ENCODE measurements at regions of chr4 and their contacts with region 1.

Region 1: DNA sequence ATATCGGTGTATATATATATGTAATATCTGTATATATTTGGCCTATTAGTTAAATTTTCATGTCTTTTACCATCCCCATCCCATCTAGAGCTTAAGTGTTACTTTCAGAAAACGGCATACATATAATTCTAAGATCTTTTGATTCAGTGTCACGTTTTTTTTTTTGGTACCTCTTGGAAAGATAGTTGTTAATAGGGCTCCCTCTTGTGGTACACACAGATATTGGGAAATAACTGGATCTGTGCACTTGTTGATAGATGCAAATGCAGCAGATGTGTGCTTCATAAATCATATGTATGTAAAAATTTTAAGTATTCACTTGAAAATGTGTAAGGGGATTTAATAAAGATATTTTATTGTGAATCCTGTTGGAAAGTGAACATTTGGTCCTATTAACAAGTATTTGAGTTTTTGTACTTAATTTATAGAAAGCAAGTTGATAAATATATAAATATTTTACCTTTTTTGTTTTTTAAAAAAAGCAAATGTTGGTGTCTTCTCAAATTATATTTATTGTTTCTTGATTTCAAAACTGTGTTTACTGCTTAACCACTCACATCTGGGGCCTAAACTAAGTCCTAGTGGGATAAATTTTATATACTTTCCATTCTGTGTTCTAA is 74.7 kb downstream of the PAQR3 start:
- DNase-seq: peak; percentile 44
- ATAC-seq: peak; percentile 80
- H3K4me3 ChIP-seq: no peak overlapping the region
- H3K27ac ChIP-seq: no peak overlapping the region
- H3K4me1 ChIP-seq: peaks cover 7% of the 10 kb centered on the region
- H3K27me3 ChIP-seq: no peaks in the 10 kb centered on the region
- CTCF ChIP-seq: peak; percentile 60 to 77 (median 60); a peak in 5 of 6 replicates
- EP300 ChIP-seq: no peak
- POLR2A ChIP-seq: no peak
- RAD21 ChIP-seq: peak; percentile 96

Region 2: DNA sequence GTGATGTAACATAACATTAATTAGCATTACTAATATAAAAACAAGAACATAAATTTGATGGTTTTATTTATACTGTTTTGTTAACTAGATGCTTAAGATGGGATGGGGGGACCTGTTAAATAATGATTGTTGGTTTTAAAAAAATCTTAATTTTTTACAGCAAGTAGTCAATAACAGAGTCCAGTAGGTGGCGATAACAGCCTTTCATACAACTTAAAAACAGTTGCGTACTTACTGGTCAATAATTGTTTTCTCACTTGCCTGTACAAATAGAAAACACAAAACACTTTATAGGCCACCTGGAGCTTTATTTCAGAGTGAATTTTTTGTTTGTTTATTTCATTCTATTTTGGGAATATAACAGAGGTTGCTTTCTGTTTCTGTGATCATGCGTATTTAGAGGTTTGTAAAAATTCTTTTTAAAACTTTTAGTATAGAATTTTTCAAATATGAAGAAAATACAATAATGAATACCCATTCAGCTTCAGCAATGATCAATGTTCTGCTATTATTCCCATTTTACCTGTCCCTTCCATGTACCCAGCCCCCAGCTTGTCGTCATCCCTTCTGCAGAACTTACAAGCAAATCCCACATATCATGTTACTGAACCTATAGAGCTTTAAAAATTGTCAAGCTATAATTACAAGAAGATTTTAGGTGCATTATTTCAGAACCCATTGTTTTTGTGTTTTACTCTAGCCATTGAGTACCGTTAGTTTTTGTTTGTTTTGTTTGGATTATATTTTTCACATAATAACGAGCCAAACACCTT is 904.8 kb before region 1 on chr4:
- CTCF ChIA-PET with region 1: interaction called, 14 read pairs
- POLR2A ChIA-PET with region 1: no interaction called
- RAD21 ChIA-PET with region 1: no interaction called
- SMC1A ChIA-PET with region 1: interaction called, 9 read pairs
- in situ Hi-C with region 1: loop called (anchors 10 kb)
- intact Hi-C with region 1: loop called (anchors 2 kb)
- DNase-seq: peak; percentile 12
- ATAC-seq: peak; percentile 52
- H3K4me3 ChIP-seq: no peak overlapping the region
- H3K27ac ChIP-seq: no peak overlapping the region
- H3K4me1 ChIP-seq: no peaks in the 10 kb centered on the region
- H3K27me3 ChIP-seq: no peaks in the 10 kb centered on the region
- CTCF ChIP-seq: peak; percentile 53 to 54 (median 53)
- EP300 ChIP-seq: no peak
- POLR2A ChIP-seq: no peak
- RAD21 ChIP-seq: peak; percentile 74

Region 3: GRCh38 chr4:78459327-78459726 is 405.2 kb before region 1 on chr4:
- CTCF ChIA-PET with region 1: no interaction called
- POLR2A ChIA-PET with region 1: no interaction called
- RAD21 ChIA-PET with region 1: interaction called, 3 read pairs
- SMC1A ChIA-PET with region 1: no interaction called
- in situ Hi-C with region 1: no loop called
- intact Hi-C with region 1: loop called (anchors 10 kb)
- DNase-seq: no peak
- ATAC-seq: peak; percentile 78
- H3K4me3 ChIP-seq: no peak overlapping the region
- H3K27ac ChIP-seq: no peak overlapping the region
- H3K4me1 ChIP-seq: no peaks in the 10 kb centered on the region
- H3K27me3 ChIP-seq: no peaks in the 10 kb centered on the region
- CTCF ChIP-seq: no peak
- EP300 ChIP-seq: 0 out of 4 replicates have a peak, but pooled peaks of 1 of the 2 experiments have one; percentile 34
- POLR2A ChIP-seq: no peak
- RAD21 ChIP-seq: no peak

Region 4: GRCh38 chr4:78612398-78613178 is 251.9 kb before region 1 on chr4:
- CTCF ChIA-PET with region 1: interaction called, 160 read pairs
- POLR2A ChIA-PET with region 1: interaction called, 4 read pairs
- RAD21 ChIA-PET with region 1: interaction called, 134 read pairs
- SMC1A ChIA-PET with region 1: interaction called, 184 read pairs
- in situ Hi-C with region 1: loop called (anchors 5 kb)
- intact Hi-C with region 1: loop called (anchors 1 kb)
- DNase-seq: no peak
- ATAC-seq: peak; percentile 64
- H3K4me3 ChIP-seq: no peak overlapping the region
- H3K27ac ChIP-seq: no peak overlapping the region
- H3K4me1 ChIP-seq: peaks cover 35% of the 10 kb centered on the region
- H3K27me3 ChIP-seq: no peaks in the 10 kb centered on the region
- CTCF ChIP-seq: peak; percentile 55 to 80 (median 62)
- EP300 ChIP-seq: no peak
- POLR2A ChIP-seq: no peak
- RAD21 ChIP-seq: peak; percentile 89

Region 5: DNA sequence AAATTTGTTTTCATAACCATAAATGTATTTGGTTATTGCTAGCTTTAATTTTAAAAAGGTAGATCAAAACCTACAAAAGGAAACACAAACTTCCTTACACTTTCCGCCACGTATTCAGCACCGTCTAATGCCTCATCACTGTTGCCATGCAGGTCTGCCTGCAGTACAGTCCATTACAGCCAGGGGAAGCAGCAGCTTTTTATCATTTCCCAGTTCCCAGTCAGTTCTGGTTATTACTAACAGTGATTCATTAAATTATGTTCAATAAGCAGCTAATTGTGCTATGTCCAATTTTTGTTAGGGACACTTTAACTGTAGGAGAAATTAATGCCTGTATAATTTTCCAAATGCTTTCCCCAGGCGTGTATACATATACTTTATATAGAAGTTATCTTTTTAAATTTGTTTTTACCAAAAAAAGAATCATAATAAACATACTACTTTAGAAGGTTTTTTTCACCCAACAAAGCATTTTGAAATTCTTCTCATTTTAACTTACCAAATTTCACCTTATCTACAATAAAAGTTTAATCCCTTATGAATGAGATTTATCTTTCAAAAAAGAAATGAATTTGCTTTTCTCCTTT is 219.7 kb before region 1 on chr4:
- CTCF ChIA-PET with region 1: interaction called, 57 read pairs
- POLR2A ChIA-PET with region 1: interaction called, 5 read pairs
- RAD21 ChIA-PET with region 1: interaction called, 17 read pairs
- SMC1A ChIA-PET with region 1: interaction called, 74 read pairs
- in situ Hi-C with region 1: no loop called
- intact Hi-C with region 1: no loop called
- DNase-seq: no peak
- ATAC-seq: peak; percentile 92
- H3K4me3 ChIP-seq: no peak overlapping the region
- H3K27ac ChIP-seq: no peak overlapping the region
- H3K4me1 ChIP-seq: peaks cover 29% of the 10 kb centered on the region
- H3K27me3 ChIP-seq: no peaks in the 10 kb centered on the region
- CTCF ChIP-seq: peak; percentile 78 to 92 (median 92)
- EP300 ChIP-seq: no peak
- POLR2A ChIP-seq: no peak
- RAD21 ChIP-seq: peak; percentile 87

Region 6: GRCh38 chr4:78749972-78750727 is 114.4 kb before region 1 on chr4:
- CTCF ChIA-PET with region 1: interaction called, 9 read pairs
- POLR2A ChIA-PET with region 1: no interaction called
- RAD21 ChIA-PET with region 1: interaction called, 13 read pairs
- SMC1A ChIA-PET with region 1: interaction called, 21 read pairs
- in situ Hi-C with region 1: no loop called
- intact Hi-C with region 1: no loop called
- DNase-seq: peak; percentile 97
- ATAC-seq: peak; percentile 93
- H3K4me3 ChIP-seq: no peak overlapping the region
- H3K27ac ChIP-seq: peak overlapping the region; percentile 66
- H3K4me1 ChIP-seq: peaks cover 42% of the 10 kb centered on the region
- H3K27me3 ChIP-seq: no peaks in the 10 kb centered on the region
- CTCF ChIP-seq: no peak
- EP300 ChIP-seq: peak; percentile 93 to 97
- POLR2A ChIP-seq: no peak
- RAD21 ChIP-seq: no peak

Region 7: GRCh38 chr4:78784236-78784865 is 80.2 kb before region 1 on chr4:
- CTCF ChIA-PET with region 1: interaction called, 12 read pairs
- POLR2A ChIA-PET with region 1: interaction called, 3 read pairs
- RAD21 ChIA-PET with region 1: interaction called, 15 read pairs
- SMC1A ChIA-PET with region 1: interaction called, 25 read pairs
- in situ Hi-C with region 1: no loop called
- intact Hi-C with region 1: no loop called
- DNase-seq: no peak
- ATAC-seq: no peak
- H3K4me3 ChIP-seq: no peak overlapping the region
- H3K27ac ChIP-seq: no peak overlapping the region
- H3K4me1 ChIP-seq: peaks cover 3% of the 10 kb centered on the region; the same call in 1 of the 2 replicates
- H3K27me3 ChIP-seq: no peaks in the 10 kb centered on the region
- CTCF ChIP-seq: no peak
- EP300 ChIP-seq: no peak
- POLR2A ChIP-seq: no peak
- RAD21 ChIP-seq: no peak

Region 8: DNA sequence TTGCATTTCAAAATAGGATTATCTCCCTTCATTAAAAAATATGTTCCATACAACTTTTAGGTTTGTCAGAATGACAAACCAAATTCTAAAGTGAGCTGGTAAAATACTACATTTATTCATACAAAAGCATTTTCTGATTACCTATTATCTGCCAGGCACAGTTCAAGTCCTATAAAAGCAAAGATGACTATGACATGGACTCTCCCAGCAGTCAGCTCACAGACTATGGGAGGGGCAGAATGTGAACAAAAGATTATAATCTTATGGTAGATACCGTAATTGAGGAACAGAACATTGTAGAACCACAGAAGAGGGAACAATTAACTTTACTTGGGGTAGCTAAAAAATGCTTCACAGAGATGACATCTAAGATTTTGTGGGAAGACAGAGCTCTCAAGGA is 62.3 kb after region 1 on chr4:
- CTCF ChIA-PET with region 1: no interaction called
- POLR2A ChIA-PET with region 1: no interaction called
- RAD21 ChIA-PET with region 1: no interaction called
- SMC1A ChIA-PET with region 1: no interaction called
- in situ Hi-C with region 1: no loop called
- intact Hi-C with region 1: no loop called
- DNase-seq: no peak
- ATAC-seq: no peak
- H3K4me3 ChIP-seq: no peak overlapping the region
- H3K27ac ChIP-seq: no peak overlapping the region
- H3K4me1 ChIP-seq: no peaks in the 10 kb centered on the region
- H3K27me3 ChIP-seq: no peaks in the 10 kb centered on the region
- CTCF ChIP-seq: no peak
- EP300 ChIP-seq: no peak
- POLR2A ChIP-seq: no peak
- RAD21 ChIP-seq: no peak